Naive thymus-derived CD8-positive, alpha-beta T cell (primary cell): ENCODE measurements at regions of chr6 and their contacts with region 1.

Region 1: DNA sequence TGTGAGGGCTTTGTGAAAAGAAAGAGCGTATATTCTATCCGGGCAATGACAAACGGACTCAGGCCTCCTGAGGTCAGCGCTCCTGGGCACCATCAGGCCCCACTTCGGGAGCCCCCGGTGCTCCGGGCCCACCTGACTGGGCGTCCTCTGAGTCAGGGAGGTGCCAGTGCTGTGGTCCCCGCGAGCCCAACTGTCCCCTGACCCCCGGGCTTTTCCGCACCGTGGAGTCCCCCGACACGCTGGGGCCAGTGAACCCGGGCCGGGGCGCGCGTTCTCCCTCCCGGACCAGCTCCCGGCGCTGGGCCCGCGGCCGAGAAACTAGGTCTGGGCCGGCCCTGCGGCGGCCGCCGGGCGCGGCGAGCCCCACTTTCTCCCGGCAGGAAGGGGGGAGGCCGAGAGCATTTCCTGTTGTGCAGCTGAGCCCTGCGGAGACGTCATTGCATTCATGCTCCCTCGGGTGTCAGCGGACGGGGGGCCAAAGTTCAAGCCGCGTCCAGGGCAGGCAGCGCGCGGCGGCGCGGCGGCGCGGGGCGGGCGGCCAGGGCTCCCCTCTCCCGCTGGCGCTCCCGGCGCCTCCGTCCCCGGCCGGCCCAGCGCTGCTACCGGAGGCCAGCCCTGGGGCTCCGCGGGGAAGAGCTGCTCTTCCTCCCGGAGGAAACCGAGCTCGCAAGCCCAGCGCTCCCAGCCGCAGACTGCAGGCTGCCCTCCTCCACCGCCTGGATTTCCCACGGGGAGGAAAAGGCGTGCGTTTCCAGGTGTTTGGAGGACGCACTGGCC is 18.3 kb downstream of the HIVEP2 start:
- DNase-seq: peak; percentile 66 to 94 (median 84)
- ATAC-seq: peak; percentile 74 to 83
- H3K4me3 Mint-ChIP-seq: peak overlapping the region; percentile 72 to 99 (median 96)
- H3K27ac Mint-ChIP-seq: peak overlapping the region; percentile 91 to 100 (median 98)
- H3K4me1 Mint-ChIP-seq: peaks cover 25 to 72% (median 55%) of the 10 kb centered on the region in 4 donors
- H3K27me3 Mint-ChIP-seq: no peaks in the 10 kb centered on the region

Region 2: GRCh38 chr6:142810952-142811514 is 115.6 kb before region 1 on chr6:
- POLR2A ChIA-PET with region 1: no interaction called
- DNase-seq: peak in 1 of 10 donors; percentile 13
- ATAC-seq: peak; percentile 62 to 72
- H3K4me3 Mint-ChIP-seq: peak overlapping the region in 9 of 10 donors; percentile 9 to 71 (median 53)
- H3K27ac Mint-ChIP-seq: peak overlapping the region; percentile 3 to 98 (median 62)
- H3K4me1 Mint-ChIP-seq: peaks cover 49 to 83% (median 76%) of the 10 kb centered on the region in 4 donors
- H3K27me3 Mint-ChIP-seq: no peaks in the 10 kb centered on the region

Region 3: GRCh38 chr6:142845624-142846458 is 80.8 kb before region 1 on chr6:
- POLR2A ChIA-PET with region 1: interaction called, 14 read pairs
- DNase-seq: peak; percentile 39 to 79 (median 61)
- ATAC-seq: peak; percentile 63 to 78
- H3K4me3 Mint-ChIP-seq: peak overlapping the region; percentile 77 to 90 (median 86)
- H3K27ac Mint-ChIP-seq: peak overlapping the region; percentile 91 to 98 (median 96)
- H3K4me1 Mint-ChIP-seq: peaks cover 40 to 98% (median 89%) of the 10 kb centered on the region in 4 donors
- H3K27me3 Mint-ChIP-seq: no peaks in the 10 kb centered on the region

Region 4: DNA sequence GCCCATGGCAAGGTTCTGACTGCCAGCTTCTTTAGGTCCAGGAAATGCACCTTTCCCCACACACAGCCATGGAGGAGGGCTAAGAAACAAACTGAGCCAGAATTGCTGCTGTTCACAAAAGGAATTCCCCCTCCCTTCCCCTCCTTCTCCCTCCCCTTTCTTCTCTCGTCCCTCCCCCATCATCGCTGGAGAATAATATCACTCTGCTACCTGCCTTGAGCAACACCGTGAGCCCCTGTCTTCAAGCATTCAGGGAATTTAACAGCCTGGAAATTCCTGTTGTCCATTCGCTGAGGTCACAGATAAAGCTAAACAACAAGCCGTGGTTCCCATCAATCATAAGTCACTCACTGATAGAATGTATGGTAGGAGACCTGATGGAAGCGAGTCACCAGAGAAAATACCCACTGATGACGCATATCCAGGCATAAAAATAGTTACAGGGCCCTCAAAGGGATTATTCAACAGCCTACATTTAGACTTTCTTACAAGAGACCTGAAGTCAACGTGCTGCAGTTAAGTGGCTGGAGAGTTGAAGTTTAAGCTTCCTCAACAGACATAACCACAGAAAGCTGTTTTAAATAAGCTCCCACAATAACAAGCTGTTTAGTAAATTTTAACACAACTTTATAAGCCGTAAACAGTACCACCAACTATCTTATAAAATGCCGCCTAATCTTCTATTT is 41.4 kb before region 1 on chr6:
- POLR2A ChIA-PET with region 1: interaction called, 16 read pairs
- DNase-seq: peak; percentile 21 to 85 (median 72)
- ATAC-seq: peak; percentile 86 to 90
- H3K4me3 Mint-ChIP-seq: peak overlapping the region; percentile 78 to 99 (median 97)
- H3K27ac Mint-ChIP-seq: peak overlapping the region; percentile 89 to 100 (median 100)
- H3K4me1 Mint-ChIP-seq: peaks cover 37 to 96% (median 88%) of the 10 kb centered on the region in 4 donors
- H3K27me3 Mint-ChIP-seq: no peaks in the 10 kb centered on the region

Region 5: DNA sequence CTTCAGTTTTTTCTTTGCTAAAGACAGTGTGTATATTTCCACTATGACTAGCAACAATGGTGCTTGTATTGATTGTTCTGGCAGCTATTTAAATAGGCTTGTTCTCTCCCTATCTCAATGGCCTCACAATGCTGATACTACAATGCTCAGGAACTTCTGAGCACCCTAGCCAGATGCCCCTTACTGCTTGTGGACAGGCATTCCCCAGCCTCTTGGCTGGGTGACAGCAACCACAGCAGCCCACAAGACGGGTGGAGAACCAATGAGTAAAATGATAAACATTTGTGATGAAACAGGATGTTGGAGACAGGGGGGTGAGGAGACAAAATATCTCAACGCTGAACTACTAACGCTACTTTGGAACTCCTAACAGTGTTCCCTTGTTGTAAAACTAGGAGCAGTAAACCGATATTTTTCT is 24.0 kb before region 1 on chr6:
- POLR2A ChIA-PET with region 1: interaction called, 106 read pairs
- DNase-seq: peak; percentile 60 to 91 (median 84)
- ATAC-seq: peak; percentile 59 to 66
- H3K4me3 Mint-ChIP-seq: peak overlapping the region in 8 of 10 donors; percentile 59 to 84 (median 82)
- H3K27ac Mint-ChIP-seq: peak overlapping the region in 2 of 10 donors; percentile 95 to 98
- H3K4me1 Mint-ChIP-seq: peaks cover 26 to 69% (median 53%) of the 10 kb centered on the region in 4 donors
- H3K27me3 Mint-ChIP-seq: no peaks in the 10 kb centered on the region

Region 6: DNA sequence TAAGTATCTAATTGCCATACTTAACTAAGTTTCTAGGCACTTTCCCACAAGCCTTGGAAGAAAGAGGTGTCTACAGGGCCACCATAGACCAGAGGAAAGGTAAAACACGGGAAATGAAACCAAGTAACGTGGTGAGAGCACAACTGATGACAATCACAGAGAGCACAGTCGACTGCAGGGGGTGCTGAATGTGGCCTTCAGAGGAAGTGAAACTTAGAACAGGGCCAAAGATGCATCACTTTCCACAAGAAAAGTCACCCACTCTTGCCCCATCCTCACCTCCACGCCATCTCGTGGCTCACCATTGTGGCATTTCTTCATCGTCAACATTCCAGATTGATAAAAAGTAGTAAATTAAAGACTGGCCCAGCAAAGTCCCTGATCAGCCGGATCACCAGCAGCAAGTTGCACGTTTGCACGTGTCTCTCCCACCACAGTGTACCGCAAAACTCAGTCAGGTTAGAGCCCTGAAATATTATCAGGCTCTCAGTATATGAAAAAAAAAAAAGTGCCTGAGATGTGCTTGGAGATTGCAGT is 13.1 kb before region 1 on chr6:
- POLR2A ChIA-PET with region 1: interaction called, 50 read pairs
- DNase-seq: peak; percentile 24 to 85 (median 72)
- ATAC-seq: peak; percentile 84 to 93
- H3K4me3 Mint-ChIP-seq: peak overlapping the region; percentile 74 to 93 (median 88)
- H3K27ac Mint-ChIP-seq: peak overlapping the region in 9 of 10 donors; percentile 96 to 100 (median 99)
- H3K4me1 Mint-ChIP-seq: peaks cover 36 to 84% (median 75%) of the 10 kb centered on the region in 4 donors
- H3K27me3 Mint-ChIP-seq: no peaks in the 10 kb centered on the region

Region 7: GRCh38 chr6:142946181-142946923 is 19.7 kb after region 1 on chr6:
- POLR2A ChIA-PET with region 1: interaction called, 128 read pairs
- DNase-seq: peak; percentile 81 to 96 (median 92)
- ATAC-seq: peak; percentile 43 to 47
- H3K4me3 Mint-ChIP-seq: peak overlapping the region; percentile 87 to 100 (median 94)
- H3K27ac Mint-ChIP-seq: peak overlapping the region; percentile 96 to 100 (median 98)
- H3K4me1 Mint-ChIP-seq: peaks cover 22 to 50% (median 38%) of the 10 kb centered on the region in 4 donors
- H3K27me3 Mint-ChIP-seq: peaks cover 0 to 6% (median 0%) of the 10 kb centered on the region in 5 donors

Region 8: GRCh38 chr6:142958343-142958742 is 31.7 kb after region 1 on chr6:
- POLR2A ChIA-PET with region 1: no interaction called
- DNase-seq: no peak
- ATAC-seq: no peak
- H3K4me3 Mint-ChIP-seq: no peak overlapping the region
- H3K27ac Mint-ChIP-seq: no peak overlapping the region
- H3K4me1 Mint-ChIP-seq: peaks cover 0 to 10% (median 1%) of the 10 kb centered on the region in 4 donors
- H3K27me3 Mint-ChIP-seq: no peaks in the 10 kb centered on the region

Region 9: DNA sequence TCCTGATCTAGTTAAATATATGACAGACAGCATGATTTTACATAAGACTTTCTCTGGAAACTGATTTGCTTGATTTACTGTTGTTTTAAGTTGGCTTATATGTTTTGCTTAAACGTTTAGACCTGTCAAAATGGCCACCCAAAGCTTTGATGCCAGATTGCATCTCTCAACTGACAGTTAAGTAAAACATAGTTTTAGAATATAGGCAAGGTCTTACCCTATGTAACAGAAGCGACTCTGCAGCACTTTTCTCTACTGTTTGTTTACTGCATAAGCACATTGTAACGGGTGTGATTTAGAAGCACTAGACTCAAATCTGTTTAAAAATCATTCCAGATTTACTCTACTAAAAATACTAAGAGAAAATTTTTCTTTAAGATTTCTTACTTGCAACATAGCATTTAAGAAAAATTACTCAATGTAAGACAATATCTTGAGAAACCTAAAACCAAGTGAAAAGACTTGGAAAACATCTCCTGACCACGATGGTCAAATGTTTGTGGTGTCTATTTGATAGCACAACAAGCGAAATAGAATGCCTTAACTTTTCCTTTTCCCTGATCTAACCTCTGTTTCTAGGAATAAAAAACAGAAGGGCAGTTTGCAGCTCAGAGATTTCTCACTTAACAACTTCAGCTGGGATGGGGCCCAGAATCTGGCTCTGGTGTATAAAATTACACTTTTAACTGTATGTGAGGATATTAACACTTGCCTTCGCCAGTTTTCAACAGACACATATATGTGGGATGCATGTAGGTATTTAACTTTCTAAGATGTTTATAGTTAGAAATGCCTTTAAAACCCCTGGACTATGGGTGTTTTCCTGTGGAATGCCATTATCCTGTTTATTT is 181.5 kb after region 1 on chr6:
- POLR2A ChIA-PET with region 1: no interaction called
- DNase-seq: no peak
- ATAC-seq: no peak
- H3K4me3 Mint-ChIP-seq: no peak overlapping the region
- H3K27ac Mint-ChIP-seq: no peak overlapping the region
- H3K4me1 Mint-ChIP-seq: peaks cover 0 to 4% (median 2%) of the 10 kb centered on the region in 4 donors
- H3K27me3 Mint-ChIP-seq: no peaks in the 10 kb centered on the region